PC-9 (cell line): ENCODE measurements at regions of chr3 and their contacts with region 1.

Region 1: DNA sequence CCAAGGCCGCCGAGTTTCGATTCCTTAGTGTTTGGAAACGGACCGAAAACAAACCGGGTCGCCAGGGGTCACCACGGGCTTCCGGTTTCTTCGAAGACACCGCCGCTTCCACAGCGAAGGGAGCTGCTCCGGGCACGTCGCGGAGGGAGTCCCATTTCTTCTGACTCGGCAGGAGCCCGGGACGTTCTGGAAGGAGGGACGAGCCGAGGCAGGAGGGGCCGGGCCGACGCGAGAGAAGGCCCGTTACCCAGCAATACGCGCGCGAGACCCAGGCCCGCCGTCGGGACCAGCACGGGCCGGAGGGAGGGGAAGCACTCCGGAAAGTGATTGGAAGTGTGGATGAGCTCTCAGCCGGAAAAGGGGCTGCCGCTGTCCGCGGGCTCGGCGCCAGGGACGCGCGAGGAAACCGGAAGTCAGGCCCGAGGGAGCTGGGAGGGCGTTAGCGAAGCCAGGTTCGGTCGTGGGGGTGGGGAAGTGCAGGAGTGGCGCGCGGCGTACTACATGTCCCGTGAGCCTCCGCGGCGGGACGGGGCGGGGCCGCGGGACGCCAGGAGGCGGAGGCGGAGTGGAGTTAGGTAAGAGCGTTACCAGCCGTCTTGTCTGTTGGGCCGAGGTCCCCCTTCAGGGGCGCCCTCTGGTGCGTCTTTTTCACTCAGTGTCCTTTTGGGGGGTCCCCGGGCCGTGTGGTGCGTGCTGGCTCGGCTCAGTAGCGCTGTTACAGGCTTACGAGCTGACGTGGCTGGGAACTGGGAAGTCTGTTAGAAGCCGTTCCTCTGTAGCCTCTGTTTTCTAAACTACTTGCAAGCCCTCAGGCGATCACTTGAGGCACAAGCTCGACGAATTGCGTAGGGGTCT is at the starts of genes AZI2 and ZCWPW2:
- DNase-seq: peak; percentile 74 to 92
- H3K4me3 ChIP-seq: peak within 1 kb of the TSS; percentile 87
- H3K27ac ChIP-seq: peak within 1 kb of the TSS; percentile 96
- H3K4me1 ChIP-seq: peaks cover 34% of the 10 kb centered on the region
- H3K27me3 ChIP-seq: no peaks in the 10 kb centered on the region
- CTCF ChIP-seq: 0 out of 2 replicates have a peak, but pooled peaks have one; percentile 20
- total RNA-seq, gene AZI2: 33.3 and 39.5 TPM in 2 replicates
- total RNA-seq, gene ZCWPW2: 0.80 and 0.81 TPM in 2 replicates

Region 2: GRCh38 chr3:28241221-28242160 is 107.4 kb before region 1 on chr3 and contains the start of gene CMC1:
- CTCF ChIA-PET with region 1: no interaction called
- POLR2A ChIA-PET with region 1: no interaction called
- intact Hi-C with region 1: loop called (anchors 1 kb)
- DNase-seq: peak; percentile 85 to 96
- H3K4me3 ChIP-seq: peak within 1 kb of the TSS; percentile 80
- H3K27ac ChIP-seq: peak within 1 kb of the TSS; percentile 59
- H3K4me1 ChIP-seq: peaks cover 16% of the 10 kb centered on the region; the same call in 1 of the 2 replicates
- H3K27me3 ChIP-seq: no peaks in the 10 kb centered on the region
- CTCF ChIP-seq: no peak
- total RNA-seq, gene CMC1: 26.7 and 33.8 TPM in 2 replicates